Motor neuron (in vitro differentiated cells): ENCODE measurements at regions of chr1 and their contacts with region 1.

Region 1: DNA sequence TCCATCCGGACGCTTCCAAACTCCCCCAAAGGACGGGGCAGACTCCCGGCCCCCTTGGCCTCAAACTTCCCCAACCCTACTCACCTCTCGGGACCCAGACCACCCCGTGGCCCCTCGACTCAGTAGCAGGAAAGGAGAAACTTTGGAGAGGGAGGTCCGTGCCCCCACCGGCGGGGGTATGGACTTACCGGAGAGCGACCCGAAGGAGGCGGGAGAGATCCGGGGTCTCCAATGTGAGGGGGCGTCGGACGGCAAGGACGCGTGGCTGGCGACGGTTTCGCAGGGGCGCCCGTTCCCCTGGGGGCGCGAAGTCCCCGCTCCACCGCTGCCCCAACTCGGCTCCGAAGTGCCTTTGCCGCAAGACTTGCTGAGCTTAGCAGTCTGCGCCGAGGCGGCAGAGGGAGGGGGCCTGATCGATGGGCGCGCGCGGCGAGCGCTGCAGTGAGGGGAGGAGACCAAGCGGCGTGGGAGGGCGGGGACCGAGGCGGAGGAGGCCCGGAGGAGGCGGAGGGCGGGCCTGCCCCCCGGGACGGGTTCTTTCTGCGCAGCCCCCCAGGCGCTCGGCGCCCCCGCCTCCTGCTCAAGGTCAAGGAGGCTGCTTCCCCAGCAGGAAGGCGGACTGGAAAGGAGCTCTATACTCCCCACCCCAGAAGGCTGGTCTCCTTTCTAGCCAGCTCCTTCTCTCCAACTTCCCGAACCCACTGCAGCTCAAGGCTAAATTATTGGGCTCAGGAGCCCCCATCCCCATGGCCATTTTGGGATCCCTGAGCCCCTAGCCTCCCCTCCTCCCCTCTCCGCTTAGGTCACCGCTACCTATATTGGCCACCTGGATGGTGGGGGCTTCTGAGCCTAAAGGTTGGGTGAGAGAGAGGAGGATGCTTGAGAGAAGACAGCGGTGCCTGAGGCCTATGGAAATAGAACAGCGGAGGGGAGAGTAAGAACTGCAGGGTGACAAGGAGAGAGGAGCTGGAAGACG is at the start of gene SYT2:
- ATAC-seq: peak; percentile 87 to 94 (median 92)
- H3K4me3 ChIP-seq: peak within 1 kb of the TSS; percentile 22 to 32 (median 30)
- H3K27ac ChIP-seq: no peak within 1 kb of the TSS
- H3K4me1 ChIP-seq: peaks cover 35 to 39% of the 10 kb centered on the region in 2 donors
- total RNA-seq, gene SYT2: 0.29 to 23.5 (median 5.5) TPM

Region 2: DNA sequence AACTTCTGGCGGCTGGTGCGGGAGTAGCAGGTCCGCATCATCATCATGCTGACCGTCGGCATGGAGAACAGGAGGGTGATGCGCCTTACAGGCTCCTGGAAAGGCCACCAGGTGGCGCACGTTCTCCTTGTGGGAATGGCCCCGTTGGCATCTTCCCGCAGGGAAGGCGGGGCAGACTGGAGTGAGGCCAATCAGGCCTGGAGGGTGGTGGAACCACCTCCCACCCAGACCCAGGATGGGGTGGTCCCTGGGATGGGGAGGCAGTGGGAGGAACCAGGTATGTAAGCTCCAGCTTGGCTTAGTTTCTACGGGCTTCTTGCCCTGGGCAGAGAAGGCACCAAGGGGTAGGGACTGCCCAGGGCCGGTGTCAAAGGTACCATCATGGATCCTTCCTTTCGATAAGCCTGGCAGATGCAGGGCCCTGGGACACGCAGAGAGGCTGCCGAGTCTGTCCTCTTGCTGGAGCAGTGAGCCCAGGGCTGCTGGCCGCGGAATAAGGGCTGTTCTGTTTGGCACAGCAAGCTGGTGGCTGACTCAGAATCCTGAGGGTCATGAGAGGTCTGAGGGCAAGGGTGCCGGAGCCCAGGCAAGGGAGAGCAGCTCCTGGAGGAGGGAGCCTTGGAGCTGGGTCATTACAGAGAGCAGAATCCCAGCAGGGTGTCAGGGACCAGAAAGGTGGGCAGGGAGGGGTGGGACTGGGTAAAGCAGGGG is 525.5 kb before region 1 on chr1:
- in situ Hi-C with region 1: loop called in 1 of 9 experiments (anchors 25 kb)
- ATAC-seq: peak; percentile 86 to 95 (median 89)
- H3K4me3 ChIP-seq: no peak overlapping the region
- H3K27ac ChIP-seq: no peak overlapping the region
- H3K4me1 ChIP-seq: peaks cover 0 to 11% of the 10 kb centered on the region in 2 donors

Region 3: DNA sequence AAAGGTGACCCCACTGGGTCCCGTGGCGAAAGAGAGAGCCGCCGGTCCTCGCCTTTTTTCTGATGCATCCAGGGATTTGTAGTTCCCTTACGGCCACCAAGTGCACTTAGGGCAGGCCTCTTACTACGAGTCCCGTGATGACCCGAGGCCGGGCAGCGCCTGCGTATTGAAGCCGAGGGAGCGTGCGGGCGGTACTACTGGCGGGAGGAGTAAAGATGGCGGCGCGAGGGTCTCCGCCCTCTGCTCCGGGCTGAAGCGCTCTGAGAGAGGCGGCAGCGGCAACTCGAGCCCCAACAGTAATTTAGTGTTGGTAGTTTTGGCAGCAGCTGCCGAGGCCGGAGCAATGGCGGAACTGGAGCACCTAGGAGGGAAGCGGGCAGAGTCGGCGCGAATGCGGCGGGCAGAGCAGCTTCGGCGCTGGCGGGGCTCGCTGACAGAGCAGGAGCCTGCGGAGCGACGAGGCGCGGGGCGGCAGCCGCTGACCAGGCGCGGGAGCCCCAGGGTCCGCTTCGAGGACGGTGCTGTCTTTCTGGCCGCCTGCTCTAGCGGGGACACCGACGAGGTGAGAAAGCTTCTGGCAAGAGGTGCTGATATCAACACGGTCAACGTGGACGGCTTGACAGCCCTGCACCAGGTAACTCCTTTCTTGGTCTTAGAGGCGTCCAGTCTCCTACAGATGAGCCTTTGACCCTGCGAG is 361.7 kb before region 1 on chr1 and contains the start of gene PPP1R12B:
- in situ Hi-C with region 1: loop called in 2 of 9 experiments (anchors 25 kb)
- ATAC-seq: peak; percentile 91 to 99 (median 96)
- H3K4me3 ChIP-seq: peak within 1 kb of the TSS; percentile 66 to 87 (median 76)
- H3K27ac ChIP-seq: peak within 1 kb of the TSS; percentile 73 to 74
- H3K4me1 ChIP-seq: peaks cover 3 to 9% of the 10 kb centered on the region in 2 donors
- total RNA-seq, gene PPP1R12B: 9.7 to 113 (median 18.6) TPM

Region 4: DNA sequence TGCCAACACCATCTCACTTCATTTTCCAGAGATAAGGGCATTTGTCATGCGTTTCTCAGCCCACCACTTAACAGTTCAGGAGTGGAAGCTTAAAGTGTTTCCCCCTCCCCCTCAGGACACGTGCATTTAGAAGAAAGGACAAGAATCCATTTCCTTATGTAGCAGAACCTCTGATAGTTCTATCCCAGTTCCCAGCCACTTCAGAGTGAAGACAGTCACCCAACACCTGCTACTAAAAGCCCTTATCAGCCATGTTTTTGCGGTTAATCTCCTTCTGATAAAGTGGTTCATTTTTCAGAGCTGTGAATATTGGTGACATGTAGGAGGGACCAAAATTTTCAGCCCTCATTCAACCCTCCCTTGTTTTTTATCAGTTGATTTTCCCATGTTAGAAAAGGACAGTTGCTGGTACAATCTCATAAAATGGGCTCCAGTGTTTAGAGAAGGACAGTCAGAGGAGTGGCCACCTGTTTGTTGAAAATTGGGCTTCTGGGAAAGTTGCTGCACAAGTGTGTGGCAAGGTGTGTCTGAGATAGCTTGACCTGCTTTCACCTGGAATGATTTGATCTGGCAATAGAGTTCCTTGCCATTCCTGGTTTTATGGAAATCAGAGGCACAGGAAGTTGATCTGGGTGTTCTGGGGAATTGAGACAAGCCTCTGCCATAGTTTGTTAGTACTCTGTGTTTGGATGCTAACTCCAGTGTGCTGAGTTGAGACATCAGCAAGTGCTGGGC is 247.8 kb before region 1 on chr1:
- in situ Hi-C with region 1: loop called in 1 of 9 experiments (anchors 25 kb)
- ATAC-seq: no peak
- H3K4me3 ChIP-seq: no peak overlapping the region
- H3K27ac ChIP-seq: no peak overlapping the region
- H3K4me1 ChIP-seq: no peaks in the 10 kb centered on the region

Region 5: DNA sequence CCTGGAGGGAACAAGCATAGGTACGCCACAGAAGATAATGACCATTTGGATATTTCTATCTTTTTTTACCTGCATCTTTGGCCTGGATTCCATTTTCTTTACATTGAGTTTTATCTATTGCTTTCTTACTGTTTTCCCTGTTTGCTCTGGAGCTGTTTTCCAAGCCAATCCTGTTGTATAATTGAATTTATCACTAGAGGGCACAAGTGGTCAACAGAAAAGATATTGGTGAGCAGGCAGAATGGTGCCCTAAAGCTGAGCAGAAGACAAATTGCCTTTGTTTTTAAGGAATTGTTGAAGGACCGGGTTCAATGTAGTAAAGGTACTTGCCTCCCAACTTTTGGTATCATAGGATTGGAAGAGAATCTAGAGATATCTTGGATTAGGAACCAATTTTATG is 209.1 kb before region 1 on chr1:
- in situ Hi-C with region 1: loop called in 2 of 9 experiments (anchors 25 kb)
- ATAC-seq: peak; percentile 24 to 77 (median 60)
- H3K4me3 ChIP-seq: no peak overlapping the region
- H3K27ac ChIP-seq: no peak overlapping the region
- H3K4me1 ChIP-seq: peaks cover 0 to 2% of the 10 kb centered on the region in 2 donors

Region 6: GRCh38 chr1:202926720-202927491 is 216.5 kb after region 1 on chr1 and contains the start of gene KLHL12:
- in situ Hi-C with region 1: no loop called
- ATAC-seq: peak; percentile 97 to 99 (median 98)
- H3K4me3 ChIP-seq: peak within 1 kb of the TSS; percentile 64 to 95 (median 85)
- H3K27ac ChIP-seq: peak within 1 kb of the TSS; percentile 65 to 80
- H3K4me1 ChIP-seq: peaks cover 7 to 8% of the 10 kb centered on the region in 2 donors
- total RNA-seq, gene KLHL12: 16.4 to 42.5 (median 31.9) TPM